Endothelial cell of umbilical vein (primary cell): ENCODE measurements at regions of chr11 and their contacts with region 1.

Region 1: GRCh38 chr11:12288212-12288930 is 89.0 kb upstream of the PARVA start:
- DNase-seq: peak; percentile 87
- H3K4me3 ChIP-seq: no peak overlapping the region
- H3K27ac ChIP-seq: peak overlapping the region; percentile 97
- H3K4me1 ChIP-seq: peaks cover 44% of the 10 kb centered on the region
- H3K27me3 ChIP-seq: no peaks in the 10 kb centered on the region
- CTCF ChIP-seq: peak; percentile 96 to 97
- POLR2A ChIP-seq: no peak

Region 2: GRCh38 chr11:11977206-11977938 is 311.0 kb before region 1 on chr11:
- CTCF ChIA-PET with region 1: interaction called, 3 read pairs
- POLR2A ChIA-PET with region 1: no interaction called
- dilution Hi-C with region 1: no loop called
- intact Hi-C with region 1: loop called (anchors 1 kb)
- DNase-seq: peak; percentile 95
- H3K4me3 ChIP-seq: no peak overlapping the region
- H3K27ac ChIP-seq: peak overlapping the region; percentile 95
- H3K4me1 ChIP-seq: peaks cover 55% of the 10 kb centered on the region
- H3K27me3 ChIP-seq: no peaks in the 10 kb centered on the region
- CTCF ChIP-seq: no peak
- POLR2A ChIP-seq: peak; percentile 51

Region 3: DNA sequence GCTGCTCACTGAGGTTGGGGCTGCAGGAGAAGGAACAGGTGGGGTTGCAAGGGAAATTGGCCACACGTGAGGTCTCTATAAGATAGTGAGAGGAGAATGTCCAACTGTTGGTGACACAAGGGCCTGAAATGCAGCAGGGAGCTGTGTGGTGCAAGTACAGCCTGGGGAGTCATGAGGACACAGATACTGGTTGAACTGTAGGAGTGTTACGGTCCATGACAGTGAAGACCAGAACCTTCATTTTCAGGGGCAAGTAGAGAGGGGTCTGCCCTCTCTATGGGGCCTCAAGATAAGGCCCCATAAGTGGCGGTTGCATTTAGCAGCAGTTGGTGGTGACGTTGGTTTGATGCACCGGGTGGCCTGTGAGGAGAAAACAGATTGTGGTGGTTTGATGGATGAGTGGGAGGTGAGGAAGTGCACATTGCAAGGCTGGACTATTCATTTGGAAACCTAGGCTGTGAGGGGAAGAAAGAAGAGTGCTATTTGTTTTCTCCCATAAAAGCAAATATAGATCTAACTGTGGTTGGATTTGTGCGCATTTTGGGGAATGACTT is 138.6 kb before region 1 on chr11:
- CTCF ChIA-PET with region 1: no interaction called
- POLR2A ChIA-PET with region 1: no interaction called
- dilution Hi-C with region 1: no loop called
- intact Hi-C with region 1: no loop called
- DNase-seq: no peak
- H3K4me3 ChIP-seq: no peak overlapping the region
- H3K27ac ChIP-seq: no peak overlapping the region
- H3K4me1 ChIP-seq: no peaks in the 10 kb centered on the region
- H3K27me3 ChIP-seq: no peaks in the 10 kb centered on the region
- CTCF ChIP-seq: no peak
- POLR2A ChIP-seq: no peak

Region 4: DNA sequence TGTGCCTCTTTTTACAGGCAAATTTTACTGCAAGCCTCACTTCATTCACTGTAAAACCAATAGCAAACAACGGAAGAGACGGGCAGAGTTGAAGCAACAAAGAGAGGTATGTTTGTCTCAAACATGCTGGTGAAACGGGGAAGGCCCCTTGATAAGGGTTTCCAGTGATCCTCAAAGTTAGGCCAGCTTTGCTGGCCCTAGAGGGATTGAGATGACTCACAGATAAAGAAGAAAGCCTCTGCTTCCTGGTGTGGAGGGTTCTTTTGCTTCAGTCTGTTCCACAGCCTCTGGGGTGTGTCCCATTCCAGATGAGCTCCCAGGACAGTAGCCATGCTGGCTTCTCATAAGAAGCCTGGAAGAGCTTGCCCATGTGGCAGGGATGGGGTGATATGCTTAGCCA is 29.9 kb before region 1 on chr11:
- CTCF ChIA-PET with region 1: no interaction called
- POLR2A ChIA-PET with region 1: no interaction called
- dilution Hi-C with region 1: no loop called
- intact Hi-C with region 1: no loop called
- DNase-seq: no peak
- H3K4me3 ChIP-seq: no peak overlapping the region
- H3K27ac ChIP-seq: no peak overlapping the region
- H3K4me1 ChIP-seq: no peaks in the 10 kb centered on the region
- H3K27me3 ChIP-seq: no peaks in the 10 kb centered on the region
- CTCF ChIP-seq: no peak
- POLR2A ChIP-seq: no peak

Region 5: GRCh38 chr11:12303421-12304149 is 15.2 kb after region 1 on chr11:
- CTCF ChIA-PET with region 1: interaction called, 22 read pairs
- POLR2A ChIA-PET with region 1: no interaction called
- dilution Hi-C with region 1: no loop called
- intact Hi-C with region 1: no loop called
- DNase-seq: no peak
- H3K4me3 ChIP-seq: no peak overlapping the region
- H3K27ac ChIP-seq: no peak overlapping the region
- H3K4me1 ChIP-seq: no peaks in the 10 kb centered on the region
- H3K27me3 ChIP-seq: peaks cover 0 to 1% of the 10 kb centered on the region in 2 experiments
- CTCF ChIP-seq: no peak
- POLR2A ChIP-seq: no peak

Region 6: GRCh38 chr11:12377824-12378593 is 89.6 kb after region 1 on chr11:
- CTCF ChIA-PET with region 1: interaction called, 11 read pairs
- POLR2A ChIA-PET with region 1: no interaction called
- dilution Hi-C with region 1: no loop called
- intact Hi-C with region 1: loop called (anchors 1 kb)
- DNase-seq: peak; percentile 69
- H3K4me3 ChIP-seq: peak overlapping the region; percentile 72 to 82 (median 78)
- H3K27ac ChIP-seq: peak overlapping the region; percentile 95
- H3K4me1 ChIP-seq: peaks cover 16% of the 10 kb centered on the region
- H3K27me3 ChIP-seq: no peaks in the 10 kb centered on the region
- CTCF ChIP-seq: peak; percentile 12 to 23
- POLR2A ChIP-seq: no peak

Region 7: GRCh38 chr11:12693479-12694181 is 405.3 kb after region 1 on chr11:
- CTCF ChIA-PET with region 1: interaction called, 8 read pairs
- POLR2A ChIA-PET with region 1: no interaction called
- dilution Hi-C with region 1: no loop called
- intact Hi-C with region 1: loop called (anchors 5 kb)
- DNase-seq: peak; percentile 99
- H3K4me3 ChIP-seq: peak overlapping the region in 1 of 3 experiments; percentile 28
- H3K27ac ChIP-seq: peak overlapping the region; percentile 95
- H3K4me1 ChIP-seq: peaks cover 54% of the 10 kb centered on the region
- H3K27me3 ChIP-seq: no peaks in the 10 kb centered on the region
- CTCF ChIP-seq: no peak
- POLR2A ChIP-seq: peak; percentile 28

Region 8: DNA sequence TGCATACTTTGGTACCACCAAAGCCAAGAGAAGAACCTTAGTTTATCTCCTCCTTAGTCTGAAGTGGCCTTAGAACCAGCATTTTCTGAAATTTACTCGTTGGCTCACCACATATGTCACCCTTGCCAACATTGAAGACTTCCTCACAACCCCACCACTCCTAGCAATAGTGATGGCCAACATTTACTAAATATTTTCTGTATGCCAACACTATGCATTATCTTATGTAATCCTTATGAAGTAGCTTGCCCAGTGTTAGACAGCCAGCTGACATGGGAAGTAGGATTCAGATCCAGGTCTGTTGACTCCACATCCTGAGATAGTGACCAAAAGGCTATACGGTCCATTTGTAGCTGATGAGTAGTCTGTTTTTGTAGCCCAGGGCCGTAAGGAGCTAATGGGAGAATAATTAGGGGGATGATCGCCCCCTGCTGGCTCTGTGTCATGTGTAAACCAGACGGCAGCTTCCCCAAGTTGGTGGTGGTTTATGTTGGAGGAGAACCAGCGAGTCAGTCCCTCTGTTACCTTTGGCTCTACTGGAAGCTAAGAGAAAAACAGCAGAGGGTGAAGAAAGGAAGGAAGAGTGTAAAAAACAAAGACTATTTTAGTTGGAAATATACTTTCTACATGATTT is 600.3 kb after region 1 on chr11:
- CTCF ChIA-PET with region 1: interaction called, 73 read pairs
- POLR2A ChIA-PET with region 1: no interaction called
- dilution Hi-C with region 1: no loop called
- intact Hi-C with region 1: loop called (anchors 1 kb)
- DNase-seq: peak; percentile 96
- H3K4me3 ChIP-seq: no peak overlapping the region
- H3K27ac ChIP-seq: no peak overlapping the region
- H3K4me1 ChIP-seq: peaks cover 9% of the 10 kb centered on the region
- H3K27me3 ChIP-seq: no peaks in the 10 kb centered on the region
- CTCF ChIP-seq: peak; percentile 82 to 86
- POLR2A ChIP-seq: no peak

Region 9: DNA sequence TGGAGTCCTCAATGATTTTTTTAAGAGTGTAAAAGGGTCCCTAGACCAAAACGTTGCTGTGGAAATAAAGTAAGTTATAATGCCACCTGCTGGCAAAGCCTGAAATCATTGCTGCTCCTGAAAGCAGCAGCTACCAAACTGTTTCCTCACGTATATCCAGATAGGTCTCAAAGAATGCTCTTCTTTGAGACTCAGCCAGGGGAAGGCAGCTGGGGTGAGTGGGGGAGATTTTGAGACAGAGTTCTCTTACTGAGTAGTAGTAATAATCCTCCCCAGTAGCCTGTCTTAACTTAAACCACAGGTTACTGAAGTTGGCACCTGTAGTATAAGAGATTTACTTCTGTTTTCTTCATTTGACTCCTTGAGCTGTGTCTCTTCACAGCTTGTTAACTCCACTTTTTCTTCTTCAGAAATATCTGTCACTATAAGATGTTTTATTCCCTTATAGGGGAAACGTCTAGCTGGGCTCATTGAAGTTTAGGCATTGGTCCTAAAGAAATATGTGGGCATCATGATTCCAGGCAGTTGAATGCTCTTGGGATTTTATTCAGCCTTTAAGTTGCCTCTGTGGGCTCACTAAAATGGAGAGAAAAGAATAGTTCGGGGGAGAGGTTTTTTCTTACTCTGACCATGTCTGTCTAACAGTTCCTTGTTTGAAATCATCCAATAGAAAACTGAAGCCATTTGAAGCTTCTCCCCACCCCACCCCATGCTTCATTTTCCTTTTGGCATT is 1096.7 kb after region 1 on chr11:
- CTCF ChIA-PET with region 1: interaction called, 10 read pairs
- POLR2A ChIA-PET with region 1: no interaction called
- dilution Hi-C with region 1: no loop called
- intact Hi-C with region 1: no loop called
- DNase-seq: peak; percentile 65
- H3K4me3 ChIP-seq: no peak overlapping the region
- H3K27ac ChIP-seq: no peak overlapping the region
- H3K4me1 ChIP-seq: no peaks in the 10 kb centered on the region
- H3K27me3 ChIP-seq: no peaks in the 10 kb centered on the region
- CTCF ChIP-seq: peak; percentile 50 to 58
- POLR2A ChIP-seq: no peak